ENCODE measurements at regions of chr1 and their contacts with region 1.

Region 1: GRCh38 chr1:151909150-151910149 is at the start of gene THEM4:
- DNase-seq: peak; percentile 97 to 99
- H3K4me3 ChIP-seq: peak within 1 kb of the TSS; percentile 60 to 85 (median 74)
- H3K27ac ChIP-seq: peak within 1 kb of the TSS; percentile 87
- H3K4me1 ChIP-seq: peaks cover 0 to 6% (median 2%) of the 10 kb centered on the region in 4 experiments; a peak in 3 of 7 replicates
- H3K27me3 ChIP-seq: no peaks in the 10 kb centered on the region
- CTCF ChIP-seq: peak in 1 of 3 experiments; percentile 27; a peak in 1 of 4 replicates
- EP300 ChIP-seq: peak in 1 of 2 experiments; percentile 44; a peak in 1 of 3 replicates
- POLR2A ChIP-seq: peak; percentile 70 to 86
- RAD21 ChIP-seq: peak; percentile 3 to 8; a peak in 2 of 4 replicates
- total RNA-seq, gene THEM4: 8.6 and 11.2 TPM in 2 replicates

Region 2: GRCh38 chr1:151881456-151881855 is 28.0 kb before region 1 on chr1:
- CTCF ChIA-PET with region 1: interaction called, 11 read pairs
- POLR2A ChIA-PET with region 1: interaction called, 3 read pairs
- DNase-seq: no peak
- H3K4me3 ChIP-seq: no peak overlapping the region
- H3K27ac ChIP-seq: no peak overlapping the region
- H3K4me1 ChIP-seq: no peaks in the 10 kb centered on the region
- H3K27me3 ChIP-seq: no peaks in the 10 kb centered on the region
- CTCF ChIP-seq: peak in 2 of 3 experiments; percentile 18 to 29; a peak in 2 of 4 replicates
- EP300 ChIP-seq: no peak
- POLR2A ChIP-seq: no peak
- RAD21 ChIP-seq: peak; percentile 59 to 68

Region 3: GRCh38 chr1:151920149-151920548 is 10.7 kb after region 1 on chr1:
- CTCF ChIA-PET with region 1: no interaction called
- POLR2A ChIA-PET with region 1: interaction called, 10 read pairs
- DNase-seq: no peak
- H3K4me3 ChIP-seq: no peak overlapping the region
- H3K27ac ChIP-seq: no peak overlapping the region
- H3K4me1 ChIP-seq: no peaks in the 10 kb centered on the region
- H3K27me3 ChIP-seq: no peaks in the 10 kb centered on the region
- CTCF ChIP-seq: no peak
- EP300 ChIP-seq: no peak
- POLR2A ChIP-seq: no peak
- RAD21 ChIP-seq: no peak

Measured in H1 (cell line).